ENCODE measurements at regions of chr6 and their contacts with region 1.

Region 1: GRCh38 chr6:25601800-25602673 is 50.0 kb upstream of the SCGN start:
- H3K4me3 Mint-ChIP-seq: no peak overlapping the region
- H3K27ac Mint-ChIP-seq: no peak overlapping the region
- H3K4me1 Mint-ChIP-seq: no peaks in the 10 kb centered on the region
- H3K27me3 Mint-ChIP-seq: no peaks in the 10 kb centered on the region

Region 2: GRCh38 chr6:25112207-25112874 is 489.7 kb before region 1 on chr6:
- intact Hi-C with region 1: loop called (anchors 1 kb)
- H3K4me3 Mint-ChIP-seq: no peak overlapping the region
- H3K27ac Mint-ChIP-seq: no peak overlapping the region
- H3K4me1 Mint-ChIP-seq: peaks cover 18% of the 10 kb centered on the region
- H3K27me3 Mint-ChIP-seq: no peaks in the 10 kb centered on the region

Region 3: GRCh38 chr6:25223490-25223991 is 378.5 kb before region 1 on chr6:
- intact Hi-C with region 1: loop called (anchors 1 kb)
- H3K4me3 Mint-ChIP-seq: no peak overlapping the region
- H3K27ac Mint-ChIP-seq: no peak overlapping the region
- H3K4me1 Mint-ChIP-seq: peaks cover 28% of the 10 kb centered on the region
- H3K27me3 Mint-ChIP-seq: peaks cover 5% of the 10 kb centered on the region

Region 4: GRCh38 chr6:25263657-25264056 is 338.4 kb before region 1 on chr6:
- intact Hi-C with region 1: loop called (anchors 2 kb)
- H3K4me3 Mint-ChIP-seq: no peak overlapping the region
- H3K27ac Mint-ChIP-seq: no peak overlapping the region
- H3K4me1 Mint-ChIP-seq: no peaks in the 10 kb centered on the region
- H3K27me3 Mint-ChIP-seq: peaks cover 4% of the 10 kb centered on the region

Region 5: GRCh38 chr6:25961619-25962148 is 359.6 kb after region 1 on chr6:
- intact Hi-C with region 1: no loop called
- H3K4me3 Mint-ChIP-seq: peak overlapping the region; percentile 95
- H3K27ac Mint-ChIP-seq: peak overlapping the region; percentile 99
- H3K4me1 Mint-ChIP-seq: peaks cover 61% of the 10 kb centered on the region
- H3K27me3 Mint-ChIP-seq: no peaks in the 10 kb centered on the region